GM10248 (cell line): ENCODE measurements at regions of chr3 and their contacts with region 1.

Region 1: DNA sequence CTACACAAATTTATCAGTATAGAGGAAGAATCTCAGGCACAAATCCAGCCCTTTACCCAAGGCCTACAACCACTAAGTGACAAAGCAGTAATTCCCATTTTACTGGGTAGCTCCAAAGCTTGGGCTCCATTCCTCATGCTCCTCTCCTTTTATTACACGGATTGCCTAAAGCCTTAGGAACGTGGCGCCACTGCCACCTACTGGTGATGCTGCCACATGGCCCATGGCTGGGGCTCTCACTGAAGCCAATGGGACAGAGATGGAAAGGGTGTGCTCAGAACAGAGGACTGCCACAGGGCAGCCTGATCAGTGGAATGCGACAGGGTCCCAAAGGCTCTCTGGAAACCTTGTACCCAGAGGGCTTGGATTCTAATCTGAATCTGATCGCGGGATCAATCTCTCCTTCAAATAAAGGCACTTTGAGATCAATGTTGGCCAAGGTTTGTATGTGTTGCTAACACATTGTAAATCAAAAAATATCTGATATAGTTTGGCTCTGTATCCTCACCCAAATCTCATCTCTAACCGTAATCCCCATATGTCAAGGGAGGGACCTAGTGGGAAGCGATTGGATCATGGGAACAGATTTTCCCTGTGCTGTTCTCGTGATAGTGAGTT is 33.5 kb upstream of the LYZL4 start:
- DNase-seq: peak; percentile 82
- CTCF ChIP-seq: peak; percentile 99

Region 2: DNA sequence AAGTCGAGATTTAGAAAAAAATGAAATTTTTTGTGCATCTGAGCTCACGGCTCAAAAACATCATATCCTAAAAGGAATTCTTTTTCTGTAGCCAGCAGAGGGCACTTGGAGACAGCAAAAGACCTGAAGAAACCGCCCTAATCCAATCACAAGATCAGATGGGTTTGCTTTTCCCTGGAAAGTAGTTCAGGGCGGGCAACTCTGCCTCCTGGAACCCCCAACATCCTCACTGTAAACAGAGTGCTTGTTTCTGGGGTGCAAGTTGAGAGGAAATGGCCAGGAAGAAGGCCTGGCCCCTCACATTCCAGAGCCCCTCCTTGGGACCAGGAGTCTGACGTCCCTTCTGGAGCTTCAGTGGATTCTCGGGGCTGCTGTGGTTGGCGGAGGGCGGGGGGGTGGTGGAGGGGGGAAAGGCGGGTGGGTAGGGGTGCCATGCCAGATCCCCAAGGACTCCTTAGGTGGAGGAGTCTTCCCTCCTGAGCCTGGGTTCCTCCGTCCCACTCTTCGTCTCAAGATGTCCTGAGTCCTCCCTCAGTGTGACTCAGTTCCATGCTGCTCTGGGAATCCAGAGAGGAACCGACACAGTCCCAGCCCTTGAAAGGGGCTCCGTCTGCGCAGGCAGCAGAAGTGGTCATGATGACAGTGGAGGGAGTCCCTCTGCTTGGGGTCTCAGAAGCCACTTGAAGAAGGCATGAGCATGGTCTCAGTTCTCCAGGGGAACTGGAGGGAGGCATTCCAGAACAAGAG is 213.8 kb before region 1 on chr3:
- CTCF ChIA-PET with region 1: interaction called, 12 read pairs
- POLR2A ChIA-PET with region 1: no interaction called
- DNase-seq: no peak
- CTCF ChIP-seq: peak; percentile 21

Region 3: GRCh38 chr3:42264399-42265058 is 179.4 kb before region 1 on chr3:
- CTCF ChIA-PET with region 1: interaction called, 10 read pairs
- POLR2A ChIA-PET with region 1: no interaction called
- DNase-seq: no peak
- CTCF ChIP-seq: no peak